CD8-positive, alpha-beta T cell (primary cell): ENCODE measurements at regions of chr7 and their contacts with region 1.

Region 1: DNA sequence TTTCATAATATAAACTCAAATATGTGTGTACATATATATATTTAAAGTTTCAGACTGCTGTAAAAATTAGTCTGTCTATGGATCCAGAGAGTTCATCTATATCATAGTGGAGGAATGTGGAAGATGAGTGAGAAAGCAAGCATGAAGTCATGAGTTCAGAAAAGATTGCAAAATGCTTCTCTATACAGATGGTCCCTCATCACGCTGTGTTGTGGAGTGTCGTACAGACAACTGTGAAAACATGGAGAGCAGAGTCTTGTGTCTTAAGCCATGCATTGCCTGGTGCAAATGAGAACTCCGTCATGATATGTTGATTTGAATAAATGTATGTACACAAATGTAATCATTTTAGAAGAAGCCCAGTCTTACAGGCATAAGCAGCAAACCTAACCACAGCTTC is 316.9 kb downstream of the CNTNAP2 start:
- DNase-seq: no peak
- ATAC-seq: no peak
- H3K4me3 ChIP-seq: no peak overlapping the region
- H3K4me3 Mint-ChIP-seq: no peak overlapping the region
- H3K27ac ChIP-seq: no peak overlapping the region
- H3K27ac Mint-ChIP-seq: no peak overlapping the region
- H3K4me1 ChIP-seq: no peaks in the 10 kb centered on the region
- H3K4me1 Mint-ChIP-seq: no peaks in the 10 kb centered on the region
- H3K27me3 ChIP-seq: no peaks in the 10 kb centered on the region
- H3K27me3 Mint-ChIP-seq: no peaks in the 10 kb centered on the region
- CTCF ChIP-seq: no peak

Region 2: GRCh38 chr7:146397141-146397540 is 36.4 kb before region 1 on chr7:
- CTCF ChIA-PET with region 1: no interaction called
- POLR2A ChIA-PET with region 1: no interaction called
- intact Hi-C with region 1: loop called in 1 of 2 experiments (anchors 1 kb)
- DNase-seq: no peak
- ATAC-seq: no peak
- H3K4me3 ChIP-seq: no peak overlapping the region
- H3K4me3 Mint-ChIP-seq: no peak overlapping the region
- H3K27ac ChIP-seq: no peak overlapping the region
- H3K27ac Mint-ChIP-seq: no peak overlapping the region
- H3K4me1 ChIP-seq: no peaks in the 10 kb centered on the region
- H3K4me1 Mint-ChIP-seq: no peaks in the 10 kb centered on the region
- H3K27me3 ChIP-seq: no peaks in the 10 kb centered on the region
- H3K27me3 Mint-ChIP-seq: no peaks in the 10 kb centered on the region
- CTCF ChIP-seq: no peak